ENCODE measurements at regions of chr3 and their contacts with region 1.

Region 1: DNA sequence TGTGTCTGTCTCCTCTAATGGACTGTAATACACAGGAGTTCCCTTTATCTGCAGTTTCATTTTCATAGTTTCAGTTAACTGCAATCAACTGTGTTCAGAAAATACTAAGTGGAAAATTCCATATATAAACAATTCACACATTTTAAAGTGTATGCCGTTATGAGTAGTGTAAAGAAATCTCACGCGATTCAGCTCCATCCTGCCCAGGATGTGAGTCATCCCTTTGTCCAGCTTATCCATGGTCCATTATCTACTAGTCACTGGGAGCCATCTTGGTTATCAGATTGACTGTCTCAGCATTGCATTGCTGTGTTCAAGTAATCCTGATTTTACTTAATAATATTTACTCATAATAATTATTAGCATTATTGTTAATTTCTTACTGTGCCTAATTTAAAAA is 14.5 kb downstream of the ZPLD1 start:
- DNase-seq: no peak
- ATAC-seq: no peak
- H3K4me3 ChIP-seq: no peak overlapping the region
- H3K27ac ChIP-seq: no peak overlapping the region
- H3K4me1 ChIP-seq: peaks cover 20% of the 10 kb centered on the region
- H3K27me3 ChIP-seq: no peaks in the 10 kb centered on the region
- CTCF ChIP-seq: no peak

Region 2: DNA sequence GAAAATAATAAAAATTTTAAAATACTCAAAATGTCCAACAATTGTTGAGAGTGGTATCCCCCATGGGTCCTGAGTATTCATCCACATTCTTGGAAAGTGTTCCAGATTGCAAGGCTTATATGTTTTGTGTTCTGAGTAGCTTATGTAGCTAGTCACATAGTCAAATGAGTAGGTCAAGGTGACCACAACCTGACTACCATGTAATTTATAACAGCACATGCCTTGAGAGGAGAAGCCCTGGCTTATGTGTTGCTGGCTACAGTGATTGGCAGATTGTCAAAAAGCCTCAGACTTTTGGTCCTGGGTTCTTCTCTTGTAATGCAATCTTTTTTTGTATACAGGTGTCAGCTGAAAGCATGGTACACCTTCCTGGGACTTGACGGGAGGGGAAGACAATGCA is 124.9 kb before region 1 on chr3:
- CTCF ChIA-PET with region 1: no interaction called
- POLR2A ChIA-PET with region 1: no interaction called
- intact Hi-C with region 1: loop called (anchors 5 kb)
- DNase-seq: no peak
- ATAC-seq: no peak
- H3K4me3 ChIP-seq: no peak overlapping the region
- H3K27ac ChIP-seq: no peak overlapping the region
- H3K4me1 ChIP-seq: no peaks in the 10 kb centered on the region
- H3K27me3 ChIP-seq: no peaks in the 10 kb centered on the region
- CTCF ChIP-seq: no peak